Ovary (tissue), 10 donors: ENCODE measurements at regions of chr3 and their contacts with region 1.

Region 1: GRCh38 chr3:180646187-180646790 is 33.0 kb downstream of the CCDC39 start:
- DNase-seq: no peak
- H3K4me3 ChIP-seq: no peak overlapping the region
- H3K27ac ChIP-seq: no peak overlapping the region
- H3K4me1 ChIP-seq: no peaks in the 10 kb centered on the region
- H3K27me3 ChIP-seq: no peaks in the 10 kb centered on the region
- CTCF ChIP-seq: no peak
- EP300 ChIP-seq: no peak
- POLR2A ChIP-seq: no peak

Region 2: GRCh38 chr3:179801263-179801662 is 845.0 kb before region 1 on chr3:
- intact Hi-C with region 1: loop called in 1 of 4 experiments (anchors 5 kb)
- DNase-seq: no peak
- H3K4me3 ChIP-seq: no peak overlapping the region
- H3K27ac ChIP-seq: no peak overlapping the region
- H3K4me1 ChIP-seq: no peaks in the 10 kb centered on the region
- H3K27me3 ChIP-seq: no peaks in the 10 kb centered on the region
- CTCF ChIP-seq: no peak
- EP300 ChIP-seq: no peak
- POLR2A ChIP-seq: no peak